ENCODE measurements at regions of chr17 and their contacts with region 1.

Region 1: DNA sequence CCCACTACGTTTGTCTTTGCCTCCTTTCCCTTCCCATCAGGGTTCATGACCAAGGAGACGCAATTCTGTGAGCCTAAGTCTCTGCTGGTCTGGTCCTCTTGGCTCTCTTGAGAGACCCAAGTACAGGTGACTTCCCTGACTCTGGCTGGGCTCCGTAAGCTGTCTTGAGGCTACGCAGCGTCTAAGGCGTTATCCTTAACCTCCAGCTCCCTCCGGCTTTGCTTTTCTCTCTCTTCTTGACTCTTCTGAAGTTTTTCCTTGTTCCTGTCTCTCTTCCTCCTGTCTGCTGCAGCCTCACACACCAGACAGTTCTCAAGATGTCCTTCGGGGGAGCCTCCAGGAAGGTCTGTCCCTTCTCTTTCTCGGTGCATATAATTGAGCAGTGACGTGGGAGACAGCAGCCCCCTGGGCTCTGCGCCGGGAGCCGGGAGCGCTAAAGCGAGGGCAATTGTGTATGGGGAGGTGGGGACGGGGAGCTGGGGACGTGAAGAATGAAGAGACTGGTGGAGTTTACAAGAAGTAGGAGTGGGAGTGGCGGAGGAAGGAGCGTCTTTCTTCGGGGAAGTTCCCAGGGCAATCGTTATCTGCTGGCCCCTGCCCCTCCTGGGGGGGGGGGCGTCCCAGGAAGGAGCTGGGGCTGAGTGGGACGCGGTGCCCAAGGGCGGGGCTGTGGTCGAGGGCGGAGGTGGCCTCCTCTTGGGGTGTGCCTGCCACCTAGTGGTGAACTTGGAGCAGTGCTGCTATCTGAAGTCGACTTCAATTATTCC is 6.9 kb upstream of the PIRT start:
- DNase-seq: peak; percentile 84
- ATAC-seq: peak; percentile 97
- H3K4me3 ChIP-seq: peak overlapping the region; percentile 52
- H3K27ac ChIP-seq: no peak overlapping the region
- H3K4me1 ChIP-seq: peaks cover 4% of the 10 kb centered on the region
- H3K27me3 ChIP-seq: peaks cover 6% of the 10 kb centered on the region
- CTCF ChIP-seq: peak; percentile 88

Region 2: GRCh38 chr17:10668771-10669170 is 176.0 kb before region 1 on chr17:
- intact Hi-C with region 1: no loop called
- DNase-seq: no peak
- ATAC-seq: no peak
- H3K4me3 ChIP-seq: no peak overlapping the region
- H3K27ac ChIP-seq: no peak overlapping the region
- H3K4me1 ChIP-seq: no peaks in the 10 kb centered on the region
- H3K27me3 ChIP-seq: no peaks in the 10 kb centered on the region
- CTCF ChIP-seq: no peak

Region 3: GRCh38 chr17:10695586-10696407 is 149.0 kb before region 1 on chr17:
- intact Hi-C with region 1: no loop called
- DNase-seq: no peak
- ATAC-seq: no peak
- H3K4me3 ChIP-seq: peak overlapping the region; percentile 90
- H3K27ac ChIP-seq: no peak overlapping the region
- H3K4me1 ChIP-seq: peaks cover 22% of the 10 kb centered on the region
- H3K27me3 ChIP-seq: no peaks in the 10 kb centered on the region
- CTCF ChIP-seq: no peak

Region 4: DNA sequence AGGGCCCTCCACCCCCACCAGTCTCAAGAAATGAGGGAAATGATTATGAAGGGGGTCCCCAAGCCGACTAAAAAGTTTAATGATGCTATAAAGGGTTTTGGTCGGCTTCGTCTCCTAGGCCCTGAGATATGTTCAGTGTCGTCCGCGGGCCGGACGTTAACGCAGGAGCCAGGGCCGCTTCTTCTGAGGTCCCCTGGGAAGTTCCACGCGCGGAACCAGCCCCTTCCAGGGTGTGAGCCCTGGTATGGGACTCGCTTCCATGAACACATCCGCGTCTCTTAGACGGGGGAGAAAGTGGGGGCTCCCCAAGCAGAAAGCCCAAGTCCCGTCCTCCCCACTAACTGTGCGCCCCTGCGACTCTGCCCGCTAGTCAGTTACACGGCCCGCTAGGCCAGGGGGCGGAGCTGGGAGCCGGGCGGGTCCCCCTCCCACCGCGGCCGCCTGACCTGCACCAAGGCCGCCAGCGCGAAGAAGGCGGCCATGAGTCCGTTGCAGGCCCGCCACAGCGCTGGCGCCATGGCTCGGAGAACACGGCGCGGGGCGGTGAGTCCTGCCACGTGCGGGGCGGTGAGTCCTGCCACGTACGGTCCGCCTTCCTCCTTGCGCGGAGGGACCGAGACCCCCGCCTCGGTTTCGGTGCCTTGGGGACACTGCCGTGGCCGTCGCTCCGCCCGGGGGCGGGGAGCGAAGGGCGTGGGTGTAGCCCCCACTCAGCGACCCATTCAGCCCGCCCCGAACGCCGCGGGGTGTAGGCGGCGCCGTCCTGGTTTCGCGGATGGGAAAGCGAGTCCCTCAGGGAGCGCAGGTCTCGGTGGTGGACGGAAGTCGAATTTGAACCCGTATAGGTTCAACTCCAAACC is 115.2 kb before region 1 on chr17 and contains the start of gene TMEM220:
- intact Hi-C with region 1: loop called (anchors 10 kb)
- DNase-seq: peak; percentile 92
- ATAC-seq: peak; percentile 97
- H3K4me3 ChIP-seq: peak within 1 kb of the TSS; percentile 73
- H3K27ac ChIP-seq: peak within 1 kb of the TSS; percentile 90
- H3K4me1 ChIP-seq: no peaks in the 10 kb centered on the region
- H3K27me3 ChIP-seq: no peaks in the 10 kb centered on the region
- CTCF ChIP-seq: no peak
- total RNA-seq, gene TMEM220: 10.5 TPM

Region 5: DNA sequence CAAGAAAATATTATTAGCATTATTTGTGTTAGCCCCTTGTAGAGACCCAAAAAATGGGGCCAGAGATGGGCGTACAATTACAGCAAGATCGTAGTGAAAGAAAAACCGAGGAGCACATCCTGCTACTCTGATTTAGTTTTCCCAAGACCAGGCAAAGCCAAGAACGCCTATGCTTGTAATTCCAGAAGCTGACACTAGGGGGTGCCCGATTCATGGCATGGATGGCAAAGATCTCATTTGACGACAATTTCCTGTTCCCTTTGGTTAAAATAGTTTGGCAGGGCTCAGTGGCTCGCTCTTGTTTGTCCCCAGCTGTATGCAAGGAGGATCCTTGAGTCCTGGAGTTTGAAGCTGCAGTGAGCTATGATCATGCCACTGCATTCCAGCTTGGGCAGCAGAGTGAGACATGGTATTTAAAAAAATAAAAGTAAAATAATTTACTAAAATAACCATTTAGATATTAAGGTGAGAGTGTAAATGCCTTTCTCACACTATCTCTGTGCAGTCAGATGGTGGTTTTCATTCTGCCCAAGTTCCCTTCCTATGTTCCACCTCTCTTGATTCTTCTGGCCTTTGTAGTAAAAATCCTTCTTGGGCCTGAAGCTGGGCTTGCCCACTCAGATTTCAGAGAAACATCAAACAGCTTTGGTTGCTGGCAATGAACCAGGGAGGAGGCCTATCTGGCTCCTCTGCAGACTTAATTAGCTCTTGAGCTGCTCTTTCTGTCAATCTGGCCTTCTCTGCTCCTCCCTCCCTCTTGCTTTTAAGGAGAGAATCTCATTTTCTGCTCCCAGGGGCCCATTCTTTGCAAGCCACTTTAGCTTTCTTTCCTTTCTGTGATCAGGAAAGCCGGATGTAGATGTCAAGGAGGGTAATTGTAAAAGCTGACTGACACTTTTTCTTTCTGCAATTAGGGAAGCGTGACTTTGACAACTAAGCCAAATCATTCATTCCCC is 72.1 kb before region 1 on chr17:
- intact Hi-C with region 1: no loop called
- DNase-seq: no peak
- ATAC-seq: peak; percentile 31
- H3K4me3 ChIP-seq: no peak overlapping the region
- H3K27ac ChIP-seq: no peak overlapping the region
- H3K4me1 ChIP-seq: no peaks in the 10 kb centered on the region
- H3K27me3 ChIP-seq: no peaks in the 10 kb centered on the region
- CTCF ChIP-seq: peak; percentile 60

Measured in upper lobe of right lung (tissue), 1 donor.